CD4-positive, alpha-beta memory T cell (primary cell): ENCODE measurements at regions of chr4 and their contacts with region 1.

Region 1: DNA sequence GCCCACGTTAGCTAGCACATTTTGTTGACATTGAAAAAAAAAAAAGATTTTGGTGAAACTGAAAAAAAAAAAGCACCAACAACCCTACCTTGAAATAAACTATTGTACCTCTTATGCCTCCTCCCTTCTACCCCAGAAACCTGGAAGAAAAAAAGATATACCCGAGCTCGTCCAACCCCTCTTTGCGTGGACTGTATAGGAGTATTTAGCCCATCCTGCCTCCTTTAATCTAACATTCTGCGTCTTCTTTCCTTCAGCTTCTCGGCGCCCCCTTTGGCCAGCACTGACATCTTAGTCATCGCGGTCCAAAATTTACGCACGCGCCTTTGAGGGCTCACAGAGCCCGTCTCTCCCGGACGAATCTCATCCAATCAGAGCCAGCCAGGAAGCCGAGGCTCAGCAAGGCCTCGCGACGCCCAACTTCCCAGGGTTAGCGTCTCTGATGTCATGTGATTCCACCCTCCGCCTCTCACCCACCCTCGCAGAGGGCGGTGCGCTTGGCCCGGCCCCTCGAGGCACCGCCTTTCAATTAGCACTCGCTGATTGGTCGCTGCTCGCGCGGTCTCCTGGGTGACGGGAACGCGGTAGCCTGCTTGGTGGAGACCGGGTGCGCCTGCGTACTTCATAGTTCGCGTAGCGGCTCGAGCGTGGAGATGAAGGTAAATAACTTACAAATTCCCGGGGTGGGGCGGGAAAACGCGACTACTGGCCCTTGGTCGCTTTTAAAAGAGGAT is at the start of gene WDR19:
- DNase-seq: peak; percentile 98 to 99 (median 98)
- H3K4me3 ChIP-seq: peak within 1 kb of the TSS; percentile 78 to 95
- H3K4me3 Mint-ChIP-seq: no peak within 1 kb of the TSS
- H3K27ac ChIP-seq: peak within 1 kb of the TSS; percentile 65
- H3K27ac Mint-ChIP-seq: peak within 1 kb of the TSS in 2 of 7 donors; percentile 4 to 39
- H3K4me1 ChIP-seq: peaks cover 12% of the 10 kb centered on the region
- H3K4me1 Mint-ChIP-seq: peaks cover 3 to 9% (median 5%) of the 10 kb centered on the region in 4 donors
- H3K27me3 ChIP-seq: no peaks in the 10 kb centered on the region
- H3K27me3 Mint-ChIP-seq: peaks cover under 1 to 9% of the 10 kb centered on the region in 2 donors
- total RNA-seq, gene WDR19: 31.6 to 36.8 TPM

Region 2: GRCh38 chr4:39032218-39033085 is 149.6 kb before region 1 on chr4 and contains the start of gene TMEM156:
- CTCF ChIA-PET with region 1: no interaction called
- POLR2A ChIA-PET with region 1: interaction called, 3 read pairs
- intact Hi-C with region 1: loop called (anchors 2 kb)
- DNase-seq: peak; percentile 65 to 81 (median 70)
- H3K4me3 ChIP-seq: peak within 1 kb of the TSS; percentile 51 to 65
- H3K4me3 Mint-ChIP-seq: peak within 1 kb of the TSS; percentile 75 to 93 (median 89)
- H3K27ac ChIP-seq: peak within 1 kb of the TSS; percentile 68
- H3K27ac Mint-ChIP-seq: peak within 1 kb of the TSS; percentile 85 to 97 (median 93)
- H3K4me1 ChIP-seq: peaks cover 43% of the 10 kb centered on the region
- H3K4me1 Mint-ChIP-seq: peaks cover 20 to 55% (median 36%) of the 10 kb centered on the region in 4 donors
- H3K27me3 ChIP-seq: no peaks in the 10 kb centered on the region
- H3K27me3 Mint-ChIP-seq: no peaks in the 10 kb centered on the region
- total RNA-seq, gene TMEM156: 16.8 to 19.3 TPM

Region 3: GRCh38 chr4:39083164-39083563 is 98.9 kb before region 1 on chr4:
- CTCF ChIA-PET with region 1: no interaction called
- POLR2A ChIA-PET with region 1: no interaction called
- intact Hi-C with region 1: no loop called
- DNase-seq: no peak
- H3K4me3 ChIP-seq: no peak overlapping the region
- H3K4me3 Mint-ChIP-seq: no peak overlapping the region
- H3K27ac ChIP-seq: no peak overlapping the region
- H3K27ac Mint-ChIP-seq: no peak overlapping the region
- H3K4me1 ChIP-seq: no peaks in the 10 kb centered on the region
- H3K4me1 Mint-ChIP-seq: peaks cover 0 to 4% (median 0%) of the 10 kb centered on the region in 4 donors
- H3K27me3 ChIP-seq: no peaks in the 10 kb centered on the region
- H3K27me3 Mint-ChIP-seq: no peaks in the 10 kb centered on the region

Region 4: GRCh38 chr4:39103291-39103690 is 78.8 kb before region 1 on chr4:
- CTCF ChIA-PET with region 1: no interaction called
- POLR2A ChIA-PET with region 1: no interaction called
- intact Hi-C with region 1: no loop called
- DNase-seq: no peak
- H3K4me3 ChIP-seq: no peak overlapping the region
- H3K4me3 Mint-ChIP-seq: no peak overlapping the region
- H3K27ac ChIP-seq: no peak overlapping the region
- H3K27ac Mint-ChIP-seq: peak overlapping the region in 2 of 7 donors; percentile 25 to 77
- H3K4me1 ChIP-seq: no peaks in the 10 kb centered on the region
- H3K4me1 Mint-ChIP-seq: peaks cover 0 to 9% (median 2%) of the 10 kb centered on the region in 4 donors
- H3K27me3 ChIP-seq: no peaks in the 10 kb centered on the region
- H3K27me3 Mint-ChIP-seq: no peaks in the 10 kb centered on the region

Region 5: DNA sequence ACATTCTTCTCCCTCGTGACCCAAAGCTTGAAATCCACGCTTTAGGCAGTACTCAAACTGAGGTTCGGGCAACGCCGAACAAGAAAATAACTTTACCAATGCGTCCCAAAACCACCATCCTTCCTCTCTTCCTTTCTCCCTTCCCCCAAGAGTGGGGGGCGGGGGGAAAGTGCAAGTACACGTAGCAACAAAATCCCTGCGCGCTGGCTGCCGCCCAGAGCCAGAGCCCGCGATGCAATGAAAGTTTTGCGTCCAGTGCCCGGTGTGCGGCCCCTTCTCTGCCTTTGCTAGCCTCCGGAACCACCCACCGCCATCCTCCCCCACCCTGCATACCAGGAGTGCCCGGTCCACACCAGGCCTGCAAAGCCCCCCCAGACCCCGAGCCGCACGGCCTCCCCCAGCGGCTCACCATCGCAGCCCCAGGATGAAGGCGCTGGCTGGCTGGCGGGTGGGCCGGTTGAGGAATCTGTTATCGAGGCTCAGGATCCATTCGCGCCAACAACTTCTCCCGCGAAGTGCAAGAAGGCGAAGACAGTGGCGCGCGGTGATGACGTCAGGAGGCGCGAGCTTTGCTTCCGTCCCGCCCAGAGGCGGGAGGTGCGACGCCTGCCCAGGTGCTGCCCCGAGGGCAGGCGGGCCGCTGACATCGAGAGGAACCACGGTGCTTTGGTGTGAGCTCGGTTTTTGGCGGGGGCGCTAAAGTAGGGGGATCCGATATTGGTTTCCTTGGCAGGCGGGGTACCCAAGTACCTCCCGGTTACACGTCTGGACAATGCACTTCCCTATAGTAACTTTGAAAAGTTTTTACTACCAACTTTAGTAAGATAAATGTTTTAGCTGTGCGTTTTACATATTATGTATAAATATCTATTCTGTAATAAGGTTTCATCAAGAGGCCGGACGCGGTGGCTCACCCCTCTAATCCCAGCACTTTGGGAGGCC is 184.0 kb after region 1 on chr4 and contains the start of gene RFC1:
- CTCF ChIA-PET with region 1: no interaction called
- POLR2A ChIA-PET with region 1: interaction called, 6 read pairs
- intact Hi-C with region 1: loop called (anchors 5 kb)
- DNase-seq: peak; percentile 89 to 94 (median 90)
- H3K4me3 ChIP-seq: peak within 1 kb of the TSS; percentile 85
- H3K4me3 Mint-ChIP-seq: peak within 1 kb of the TSS; percentile 90 to 96 (median 93)
- H3K27ac ChIP-seq: peak within 1 kb of the TSS; percentile 83
- H3K27ac Mint-ChIP-seq: peak within 1 kb of the TSS; percentile 90 to 97 (median 94)
- H3K4me1 ChIP-seq: peaks cover 38% of the 10 kb centered on the region
- H3K4me1 Mint-ChIP-seq: peaks cover 22 to 44% (median 29%) of the 10 kb centered on the region in 4 donors
- H3K27me3 ChIP-seq: no peaks in the 10 kb centered on the region
- H3K27me3 Mint-ChIP-seq: no peaks in the 10 kb centered on the region
- total RNA-seq, gene RFC1: 62.5 to 70.6 TPM

Region 6: DNA sequence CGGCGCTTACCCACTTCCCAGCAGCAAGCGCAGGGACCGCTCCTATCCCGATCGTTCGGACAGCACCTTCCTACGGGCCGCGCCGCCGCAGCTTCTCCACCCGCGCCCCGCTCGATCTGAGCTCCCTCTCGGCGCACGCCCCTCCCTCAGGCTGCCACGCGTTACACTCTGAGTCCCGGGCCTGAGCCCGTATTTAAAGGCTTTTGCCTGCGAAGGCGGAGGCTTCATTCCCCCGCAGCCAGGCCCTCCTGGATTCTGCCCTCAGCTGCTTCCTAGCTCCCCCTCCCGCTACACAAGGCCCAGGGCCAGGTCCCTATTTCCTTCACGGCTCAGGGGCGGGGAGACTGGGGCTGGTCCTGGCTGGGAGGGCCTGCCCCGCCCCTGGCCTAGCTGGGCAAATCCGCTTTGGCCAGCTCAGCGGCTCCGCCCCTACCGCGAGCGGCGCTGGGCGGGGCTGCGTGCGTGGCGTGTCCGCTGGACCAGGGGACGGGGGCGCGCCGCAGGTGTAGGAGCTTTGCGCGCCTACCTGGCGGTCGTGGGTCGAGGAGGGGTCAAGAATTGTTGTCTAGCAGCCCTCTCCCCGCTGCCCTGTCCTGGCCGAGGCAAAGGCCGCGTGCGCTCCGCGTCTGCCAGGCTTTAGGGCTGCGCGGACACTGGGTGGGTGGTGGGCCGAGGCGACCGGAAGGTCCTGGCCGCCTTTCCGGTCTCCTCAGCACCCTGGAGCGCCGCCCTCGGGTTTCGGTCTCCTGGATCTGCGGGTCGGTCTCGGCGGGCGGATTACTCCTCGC is 345.4 kb after region 1 on chr4 and contains the start of gene UGDH:
- CTCF ChIA-PET with region 1: no interaction called
- POLR2A ChIA-PET with region 1: no interaction called
- intact Hi-C with region 1: loop called (anchors 1 kb)
- DNase-seq: peak; percentile 88 to 92 (median 90)
- H3K4me3 ChIP-seq: peak within 1 kb of the TSS; percentile 71 to 91
- H3K4me3 Mint-ChIP-seq: peak within 1 kb of the TSS; percentile 97 to 99 (median 98)
- H3K27ac ChIP-seq: peak within 1 kb of the TSS; percentile 69
- H3K27ac Mint-ChIP-seq: peak within 1 kb of the TSS; percentile 78 to 98 (median 96)
- H3K4me1 ChIP-seq: peaks cover 18% of the 10 kb centered on the region
- H3K4me1 Mint-ChIP-seq: peaks cover 10 to 25% (median 18%) of the 10 kb centered on the region in 4 donors
- H3K27me3 ChIP-seq: no peaks in the 10 kb centered on the region
- H3K27me3 Mint-ChIP-seq: no peaks in the 10 kb centered on the region
- total RNA-seq, gene UGDH: 21.6 to 26.5 TPM

Region 7: DNA sequence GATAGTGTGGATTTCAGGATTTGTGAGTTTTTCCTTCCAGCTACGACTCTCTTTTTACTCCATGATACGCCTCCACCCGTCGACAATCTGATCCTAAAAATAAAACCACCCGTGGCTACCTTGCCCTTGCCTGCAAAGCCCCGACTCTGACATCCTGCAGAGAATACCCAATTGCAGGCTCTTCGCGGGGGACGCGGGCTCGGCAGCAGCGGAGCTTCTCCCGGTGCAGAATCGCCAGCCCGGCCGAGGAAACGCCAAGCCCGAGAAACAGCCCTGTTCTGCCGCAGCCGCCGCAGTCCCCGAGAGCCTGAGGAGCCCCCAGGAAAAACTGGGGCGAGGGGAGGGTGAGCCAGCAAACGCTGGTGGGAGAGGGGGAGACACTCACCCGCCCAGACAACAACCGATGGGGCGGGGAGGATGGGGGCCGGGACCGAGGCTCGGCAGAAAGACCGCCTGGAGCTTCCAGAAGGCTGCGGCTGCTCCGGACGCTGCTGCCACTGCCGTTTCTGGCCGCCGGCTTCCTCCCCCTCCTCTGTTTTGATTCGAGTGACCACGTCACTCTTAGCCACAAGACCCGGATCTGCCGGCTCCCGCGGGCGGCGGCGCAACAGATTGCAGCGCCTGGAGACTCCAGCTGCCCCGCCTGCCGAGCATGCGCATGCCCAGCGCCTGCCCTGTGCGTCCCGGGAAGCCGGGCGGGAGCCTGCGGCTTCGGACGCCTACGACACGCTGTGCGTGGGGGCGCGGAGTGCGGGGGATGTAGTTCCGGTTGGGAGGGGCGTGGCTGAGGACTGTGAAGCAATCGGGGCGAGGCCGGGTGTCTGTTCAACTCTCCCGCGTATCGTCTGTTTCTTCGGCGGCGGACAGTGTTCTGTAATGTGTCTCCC is 456.5 kb after region 1 on chr4 and contains the start of gene SMIM14:
- CTCF ChIA-PET with region 1: no interaction called
- POLR2A ChIA-PET with region 1: no interaction called
- intact Hi-C with region 1: loop called (anchors 1 kb)
- DNase-seq: peak; percentile 84 to 91 (median 86)
- H3K4me3 ChIP-seq: peak within 1 kb of the TSS; percentile 52 to 95
- H3K4me3 Mint-ChIP-seq: peak within 1 kb of the TSS; percentile 87 to 99 (median 92)
- H3K27ac ChIP-seq: peak within 1 kb of the TSS; percentile 77
- H3K27ac Mint-ChIP-seq: peak within 1 kb of the TSS; percentile 74 to 98 (median 96)
- H3K4me1 ChIP-seq: peaks cover 27% of the 10 kb centered on the region
- H3K4me1 Mint-ChIP-seq: peaks cover 20 to 54% (median 32%) of the 10 kb centered on the region in 4 donors
- H3K27me3 ChIP-seq: no peaks in the 10 kb centered on the region
- H3K27me3 Mint-ChIP-seq: no peaks in the 10 kb centered on the region
- total RNA-seq, gene SMIM14: 15.5 to 19.4 TPM

Region 8: GRCh38 chr4:39741401-39741800 is 559.3 kb after region 1 on chr4:
- CTCF ChIA-PET with region 1: no interaction called
- POLR2A ChIA-PET with region 1: no interaction called
- intact Hi-C with region 1: no loop called
- DNase-seq: no peak
- H3K4me3 ChIP-seq: no peak overlapping the region
- H3K4me3 Mint-ChIP-seq: no peak overlapping the region
- H3K27ac ChIP-seq: no peak overlapping the region
- H3K27ac Mint-ChIP-seq: no peak overlapping the region
- H3K4me1 ChIP-seq: no peaks in the 10 kb centered on the region
- H3K4me1 Mint-ChIP-seq: peaks cover 5 to 10% (median 8%) of the 10 kb centered on the region in 4 donors
- H3K27me3 ChIP-seq: no peaks in the 10 kb centered on the region
- H3K27me3 Mint-ChIP-seq: no peaks in the 10 kb centered on the region